ENCODE measurements at regions of chr12 and their contacts with region 1.

Region 1: DNA sequence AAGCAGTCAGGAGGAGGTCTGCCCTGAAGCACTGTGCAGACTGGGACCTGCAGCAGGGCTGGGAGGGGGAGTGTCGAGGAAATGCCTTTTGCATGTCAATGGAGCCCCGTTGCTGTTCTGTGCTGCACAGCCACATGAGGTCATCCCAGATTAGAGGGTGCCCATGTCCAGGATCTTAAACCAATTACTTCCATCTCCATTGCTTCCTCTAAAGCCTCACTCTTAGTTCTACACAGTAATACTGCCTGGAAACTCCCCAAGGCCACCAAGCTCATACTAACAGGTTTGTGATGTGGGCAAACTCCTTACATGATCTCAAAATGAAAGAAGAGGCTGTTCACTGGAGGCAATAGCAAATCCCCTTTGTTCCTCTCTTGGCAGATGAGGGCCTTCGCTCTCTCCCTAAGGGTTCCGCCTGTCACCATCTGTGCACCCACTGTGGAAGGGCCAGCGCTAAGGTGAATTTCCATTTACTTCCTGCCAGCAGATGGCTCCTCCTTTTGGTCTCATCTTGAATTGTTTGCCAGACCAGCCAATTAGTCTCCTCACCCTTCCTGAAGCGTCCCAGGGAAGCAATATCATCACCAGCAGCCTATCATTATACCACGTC is 35.4 kb upstream of the LTA4H start:
- DNase-seq: no peak
- ATAC-seq: peak; percentile 47 to 73
- H3K4me3 ChIP-seq: no peak overlapping the region
- H3K27ac ChIP-seq: no peak overlapping the region
- H3K4me1 ChIP-seq: no peaks in the 10 kb centered on the region
- H3K27me3 ChIP-seq: no peaks in the 10 kb centered on the region

Region 2: GRCh38 chr12:96015672-96016071 is 55.1 kb before region 1 on chr12:
- intact Hi-C with region 1: no loop called
- DNase-seq: peak in 2 of 3 donors; percentile 49 to 51
- ATAC-seq: peak; percentile 61 to 67
- H3K4me3 ChIP-seq: no peak overlapping the region
- H3K27ac ChIP-seq: no peak overlapping the region
- H3K4me1 ChIP-seq: no peaks in the 10 kb centered on the region
- H3K27me3 ChIP-seq: no peaks in the 10 kb centered on the region

Region 3: DNA sequence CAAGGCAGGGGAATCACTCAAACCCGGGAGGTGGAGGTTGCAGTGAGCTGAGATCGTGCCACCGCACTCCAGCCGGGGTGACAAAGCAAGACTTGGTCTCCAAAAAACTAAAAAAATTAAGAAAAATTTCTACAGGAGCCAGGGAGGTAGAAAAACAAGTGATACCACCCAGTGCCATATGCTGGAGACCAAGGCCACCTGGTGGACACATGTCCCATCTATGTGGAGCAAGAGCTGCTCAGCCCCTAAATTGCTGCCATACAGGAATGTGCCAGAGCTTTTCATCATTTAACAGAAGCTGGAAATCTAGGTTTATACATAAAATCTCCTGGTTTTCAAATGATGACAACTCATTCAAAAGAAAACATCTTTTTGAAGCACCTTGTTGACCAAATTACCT is 62.0 kb after region 1 on chr12:
- intact Hi-C with region 1: loop called in 1 of 4 experiments (anchors 10 kb)
- DNase-seq: peak in 2 of 3 donors; percentile 32 to 52
- ATAC-seq: no peak
- H3K4me3 ChIP-seq: no peak overlapping the region
- H3K27ac ChIP-seq: no peak overlapping the region
- H3K4me1 ChIP-seq: no peaks in the 10 kb centered on the region
- H3K27me3 ChIP-seq: no peaks in the 10 kb centered on the region

Region 4: DNA sequence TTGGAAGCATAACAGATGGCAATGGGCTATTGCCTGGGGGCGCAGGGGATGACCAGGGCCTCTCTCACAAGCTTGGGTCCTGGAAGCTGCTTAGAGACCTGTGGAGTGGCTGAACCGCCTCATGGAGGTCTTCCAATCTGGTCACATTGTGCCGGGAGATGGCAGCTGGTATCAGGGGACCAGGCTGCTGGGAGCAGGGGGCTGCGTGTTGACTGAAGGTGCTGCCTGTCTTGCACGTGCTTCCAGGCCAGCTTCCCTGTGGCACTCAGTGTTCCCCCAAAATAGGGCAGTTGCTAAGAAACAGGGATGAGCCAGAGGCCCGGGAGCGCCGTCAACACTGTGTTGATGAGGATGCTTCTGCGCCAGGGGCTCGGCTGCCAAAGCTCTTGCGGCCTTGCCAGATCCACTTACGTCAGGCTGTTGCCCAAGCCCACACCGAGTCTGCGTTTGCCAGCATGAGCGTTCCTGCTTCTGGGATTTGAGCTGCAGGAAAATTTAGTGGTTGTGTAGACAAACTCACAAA is 163.2 kb after region 1 on chr12:
- intact Hi-C with region 1: no loop called
- DNase-seq: peak; percentile 95 to 97 (median 97)
- ATAC-seq: peak; percentile 86 to 89
- H3K4me3 ChIP-seq: no peak overlapping the region
- H3K27ac ChIP-seq: peak overlapping the region; percentile 61
- H3K4me1 ChIP-seq: peaks cover 35% of the 10 kb centered on the region
- H3K27me3 ChIP-seq: no peaks in the 10 kb centered on the region